ENCODE measurements at regions of chr17 and their contacts with region 1.

Region 1: DNA sequence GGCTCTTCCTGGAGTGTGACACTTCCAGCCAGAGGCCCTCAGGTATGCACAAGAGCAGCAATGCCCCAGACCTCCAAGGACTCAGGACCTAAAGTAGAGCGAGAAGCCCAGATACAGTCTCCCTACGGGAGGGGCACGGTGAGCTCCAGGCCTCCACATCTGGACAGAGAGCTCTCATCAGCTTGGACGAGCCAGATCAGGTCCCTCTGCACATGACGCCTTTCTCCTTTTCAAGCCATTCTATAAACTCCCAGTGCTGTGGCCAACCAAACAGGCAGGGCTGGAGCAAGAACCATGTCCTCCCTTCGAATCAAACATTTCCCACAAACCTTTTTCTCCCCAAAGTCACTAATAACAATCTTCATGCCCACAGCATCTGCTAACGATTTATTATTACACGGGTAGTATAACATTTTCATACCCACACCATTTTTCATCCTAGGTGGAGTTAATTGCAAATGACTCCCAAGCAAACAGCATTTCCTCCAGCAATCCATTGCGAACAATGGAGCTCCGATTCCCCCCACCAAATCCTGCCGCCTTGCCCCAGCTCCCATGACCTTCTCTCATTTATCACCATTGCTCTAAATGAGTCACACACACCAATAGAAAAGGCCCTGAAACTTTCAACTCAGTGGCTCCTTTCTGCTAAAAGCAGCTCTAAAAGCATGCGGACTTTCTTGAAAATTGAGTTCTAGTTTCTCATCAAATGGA is 24.2 kb upstream of the NLRP1 start:
- DNase-seq: no peak
- ATAC-seq: no peak
- H3K4me3 ChIP-seq: no peak overlapping the region
- H3K27ac ChIP-seq: no peak overlapping the region
- H3K4me1 ChIP-seq: no peaks in the 10 kb centered on the region
- H3K27me3 ChIP-seq: peaks cover 74% of the 10 kb centered on the region
- CTCF ChIP-seq: no peak
- POLR2A ChIP-seq: no peak
- RAD21 ChIP-seq: no peak

Region 2: DNA sequence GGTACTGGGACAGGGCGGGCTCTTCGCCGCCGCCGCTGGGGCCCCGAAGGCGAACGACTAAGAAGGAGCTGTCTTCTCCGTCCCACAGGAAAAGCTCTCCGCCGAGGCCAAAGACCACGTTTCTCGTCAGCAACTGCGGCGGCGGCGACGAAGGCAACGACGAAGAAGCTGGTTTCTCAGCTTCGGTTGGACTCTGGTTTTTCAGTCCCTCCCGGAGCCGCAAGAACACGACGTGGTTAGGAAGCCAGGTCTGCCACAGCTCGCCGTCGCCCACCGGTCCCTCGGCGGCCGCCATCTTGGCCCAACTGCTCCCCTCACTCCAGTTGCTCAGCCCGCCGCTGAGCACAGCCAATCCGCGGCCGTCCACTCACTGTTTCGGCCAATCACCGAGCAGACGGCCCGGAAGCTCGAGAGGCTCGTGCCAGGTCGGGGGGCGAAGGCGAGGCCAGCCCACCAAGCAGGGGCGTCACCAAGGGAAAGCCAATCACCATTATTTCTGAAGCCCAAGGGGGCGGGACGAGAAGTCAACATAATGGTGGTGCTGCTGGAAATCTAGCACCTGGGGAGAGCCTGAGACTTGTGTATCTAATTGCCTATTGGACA is 189.1 kb before region 1 on chr17 and contains the start of gene NUP88:
- CTCF ChIA-PET with region 1: no interaction called
- POLR2A ChIA-PET with region 1: no interaction called
- RAD21 ChIA-PET with region 1: no interaction called
- intact Hi-C with region 1: no loop called
- DNase-seq: peak; percentile 95
- ATAC-seq: peak; percentile 95
- H3K4me3 ChIP-seq: peak within 1 kb of the TSS; percentile 85 to 98
- H3K27ac ChIP-seq: peak within 1 kb of the TSS; percentile 80
- H3K4me1 ChIP-seq: peaks cover 19 to 33% of the 10 kb centered on the region in 2 experiments
- H3K27me3 ChIP-seq: no peaks in the 10 kb centered on the region
- CTCF ChIP-seq: no peak
- POLR2A ChIP-seq: peak; percentile 77
- RAD21 ChIP-seq: no peak
- total RNA-seq, gene NUP88: 93.2 TPM

Region 3: GRCh38 chr17:5472511-5472910 is 136.0 kb before region 1 on chr17:
- CTCF ChIA-PET with region 1: no interaction called
- POLR2A ChIA-PET with region 1: no interaction called
- RAD21 ChIA-PET with region 1: no interaction called
- intact Hi-C with region 1: no loop called
- DNase-seq: no peak
- ATAC-seq: no peak
- H3K4me3 ChIP-seq: no peak overlapping the region
- H3K27ac ChIP-seq: no peak overlapping the region
- H3K4me1 ChIP-seq: peaks cover 0 to 5% of the 10 kb centered on the region in 2 experiments; a peak in 1 of 4 replicates
- H3K27me3 ChIP-seq: no peaks in the 10 kb centered on the region
- CTCF ChIP-seq: no peak
- POLR2A ChIP-seq: no peak
- RAD21 ChIP-seq: no peak

Region 4: GRCh38 chr17:5630434-5630833 is 21.9 kb after region 1 on chr17:
- CTCF ChIA-PET with region 1: no interaction called
- POLR2A ChIA-PET with region 1: no interaction called
- RAD21 ChIA-PET with region 1: no interaction called
- intact Hi-C with region 1: no loop called
- DNase-seq: no peak
- ATAC-seq: no peak
- H3K4me3 ChIP-seq: no peak overlapping the region
- H3K27ac ChIP-seq: no peak overlapping the region
- H3K4me1 ChIP-seq: no peaks in the 10 kb centered on the region
- H3K27me3 ChIP-seq: peaks cover 82% of the 10 kb centered on the region
- CTCF ChIP-seq: no peak
- POLR2A ChIP-seq: no peak
- RAD21 ChIP-seq: no peak

Region 5: GRCh38 chr17:5706577-5707216 is 98.1 kb after region 1 on chr17:
- CTCF ChIA-PET with region 1: no interaction called
- POLR2A ChIA-PET with region 1: no interaction called
- RAD21 ChIA-PET with region 1: no interaction called
- intact Hi-C with region 1: loop called (anchors 5 kb)
- DNase-seq: peak; percentile 33
- ATAC-seq: peak; percentile 92
- H3K4me3 ChIP-seq: no peak overlapping the region
- H3K27ac ChIP-seq: no peak overlapping the region
- H3K4me1 ChIP-seq: no peaks in the 10 kb centered on the region
- H3K27me3 ChIP-seq: peaks cover 33% of the 10 kb centered on the region
- CTCF ChIP-seq: peak; percentile 51 to 90 (median 90); a peak in 5 of 6 replicates
- POLR2A ChIP-seq: no peak
- RAD21 ChIP-seq: peak; percentile 66

Measured in HCT116 (cell line).